Activated CD8-positive, alpha-beta T cell treated with anti-CD3 and anti-CD28 coated beads for 36 hours (primary cell): ENCODE measurements at regions of chr1 and their contacts with region 1.

Region 1: GRCh38 chr1:44036409-44037139 is 5.3 kb upstream of the SLC6A9 start:
- DNase-seq: peak; percentile 81
- ATAC-seq: peak; percentile 93
- H3K4me3 Mint-ChIP-seq: no peak overlapping the region
- H3K27ac Mint-ChIP-seq: no peak overlapping the region
- H3K4me1 Mint-ChIP-seq: peaks cover 9% of the 10 kb centered on the region
- H3K27me3 Mint-ChIP-seq: no peaks in the 10 kb centered on the region
- CTCF ChIP-seq: peak; percentile 72

Region 2: GRCh38 chr1:43991476-43992231 is 44.9 kb before region 1 on chr1 and contains the start of gene CCDC24:
- CTCF ChIA-PET with region 1: interaction called, 19 read pairs
- POLR2A ChIA-PET with region 1: interaction called, 3 read pairs
- intact Hi-C with region 1: no loop called
- DNase-seq: peak; percentile 81
- ATAC-seq: peak; percentile 87
- H3K4me3 Mint-ChIP-seq: peak within 1 kb of the TSS; percentile 80
- H3K27ac Mint-ChIP-seq: peak within 1 kb of the TSS; percentile 59
- H3K4me1 Mint-ChIP-seq: peaks cover 12% of the 10 kb centered on the region
- H3K27me3 Mint-ChIP-seq: no peaks in the 10 kb centered on the region
- CTCF ChIP-seq: no peak
- total RNA-seq, gene CCDC24: 1.4 to 1.8 TPM